Heart right ventricle (tissue), 16 donors: ENCODE measurements at regions of chr19 and their contacts with region 1.

Region 1: DNA sequence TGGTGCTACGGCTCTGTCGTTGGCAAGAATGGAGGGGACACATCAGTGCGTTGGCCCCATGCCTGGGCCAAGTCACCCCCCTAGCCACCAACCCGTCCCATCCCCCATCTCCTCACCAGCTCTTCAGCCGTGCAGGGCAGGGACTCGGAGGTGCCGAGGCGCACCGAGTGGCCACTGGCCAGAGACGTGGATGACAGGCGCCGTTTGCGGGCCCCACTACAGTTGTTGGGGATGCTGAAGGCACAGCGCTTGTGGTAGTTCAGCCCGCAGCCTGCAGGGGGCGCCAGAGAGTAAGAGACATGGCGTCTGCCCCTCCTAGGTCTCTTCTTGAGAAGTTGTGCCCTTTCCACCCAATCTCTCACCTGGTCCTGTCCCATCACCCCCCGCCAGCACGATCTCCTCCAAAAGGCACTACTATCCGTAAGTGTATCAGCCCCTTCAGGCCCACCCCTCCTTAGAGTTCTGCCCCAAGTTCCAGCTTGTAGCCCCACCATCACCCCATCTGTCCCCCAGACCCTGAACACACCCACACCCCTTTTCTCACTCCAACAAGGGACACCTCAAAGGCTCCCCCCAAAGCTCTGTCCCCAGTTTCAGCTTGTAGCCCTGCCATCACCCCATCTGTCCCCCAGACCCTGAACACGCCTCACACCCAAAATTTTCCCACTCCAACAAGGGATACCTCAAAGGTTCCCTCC is 12.4 kb downstream of the PRKD2 start:
- DNase-seq: peak; percentile 74 to 86
- ATAC-seq: peak; percentile 74 to 84 (median 78)
- H3K4me3 ChIP-seq: no peak overlapping the region
- H3K27ac ChIP-seq: no peak overlapping the region
- H3K4me1 ChIP-seq: no peaks in the 10 kb centered on the region
- H3K27me3 ChIP-seq: no peaks in the 10 kb centered on the region
- CTCF ChIP-seq: peak; percentile 92 to 98 (median 96)

Region 2: DNA sequence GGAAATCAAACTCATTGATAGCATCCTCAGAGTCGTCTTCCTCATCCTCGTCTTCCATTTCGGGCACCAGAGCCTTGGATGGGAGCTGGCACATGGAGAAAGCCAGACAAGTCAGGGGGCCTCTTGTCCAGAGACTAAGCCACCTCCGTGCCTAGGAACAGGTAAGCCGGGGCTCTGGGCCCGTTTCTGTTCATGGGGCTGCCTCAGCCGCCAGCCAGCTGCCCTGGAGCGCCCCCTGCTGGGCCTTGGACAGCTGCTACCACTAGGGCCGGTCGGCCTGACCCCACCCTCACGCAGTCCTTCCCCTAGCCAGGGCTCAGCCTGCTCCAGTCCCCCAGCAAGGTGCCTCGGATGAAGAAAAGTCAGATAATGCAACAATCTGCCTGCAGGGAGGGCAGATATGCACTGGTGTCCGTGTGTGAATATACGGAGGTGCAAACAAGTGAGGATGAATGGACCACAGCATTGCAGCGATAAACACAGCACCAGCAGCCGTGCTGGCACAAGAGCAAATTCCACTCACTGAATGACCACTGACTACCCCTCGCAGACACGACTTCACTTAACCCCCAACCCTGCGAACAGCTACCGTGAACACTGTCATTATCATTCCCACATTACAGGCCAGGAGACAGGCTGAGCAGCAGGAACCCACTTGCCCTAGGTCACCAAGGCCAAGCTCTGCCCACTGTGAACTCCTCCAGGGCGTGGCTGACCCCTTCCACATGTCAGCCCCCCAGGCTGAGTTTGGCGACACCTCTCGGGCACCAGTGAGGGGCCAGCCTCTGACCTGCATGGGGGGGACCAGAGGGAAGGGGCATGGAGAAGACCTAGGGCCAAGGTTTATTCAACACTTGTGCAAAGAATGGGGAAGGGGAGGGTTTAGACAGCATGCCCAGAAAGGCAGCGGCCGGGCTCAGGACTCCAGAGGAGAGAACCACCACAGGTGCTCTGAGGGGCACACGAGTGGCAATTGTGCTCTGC is 24.5 kb after region 1 on chr19:
- intact Hi-C with region 1: loop called in 7 of 10 experiments (anchors 1 to 2 kb)
- DNase-seq: peak; percentile 77 to 84
- ATAC-seq: peak; percentile 66 to 90 (median 81)
- H3K4me3 ChIP-seq: peak overlapping the region in 2 of 10 donors; percentile 12 to 38
- H3K27ac ChIP-seq: peak overlapping the region in 9 of 10 donors; percentile 23 to 84 (median 77)
- H3K4me1 ChIP-seq: peaks cover 9 to 64% (median 32%) of the 10 kb centered on the region in 9 donors
- H3K27me3 ChIP-seq: no peaks in the 10 kb centered on the region
- CTCF ChIP-seq: peak; percentile 87 to 98 (median 95)

Region 3: GRCh38 chr19:46746281-46747013 is 41.9 kb after region 1 on chr19 and contains the start of gene STRN4:
- intact Hi-C with region 1: loop called in 1 of 10 experiments (anchors 5 kb)
- DNase-seq: peak in 1 of 2 donors; percentile 63
- ATAC-seq: peak; percentile 34 to 85 (median 59)
- H3K4me3 ChIP-seq: peak within 1 kb of the TSS; percentile 79 to 99 (median 96)
- H3K27ac ChIP-seq: peak within 1 kb of the TSS; percentile 83 to 98 (median 94)
- H3K4me1 ChIP-seq: peaks cover under 1 to 53% (median 44%) of the 10 kb centered on the region in 9 donors
- H3K27me3 ChIP-seq: no peaks in the 10 kb centered on the region
- CTCF ChIP-seq: no peak
- total RNA-seq, gene STRN4: 43.3 to 56.1 (median 50.0) TPM

Region 4: GRCh38 chr19:46821498-46822409 is 117.2 kb after region 1 on chr19:
- intact Hi-C with region 1: no loop called
- DNase-seq: peak in 1 of 2 donors; percentile 42
- ATAC-seq: peak in 6 of 8 donors; percentile 29 to 66 (median 44)
- H3K4me3 ChIP-seq: no peak overlapping the region
- H3K27ac ChIP-seq: peak overlapping the region in 1 of 10 donors; percentile 72
- H3K4me1 ChIP-seq: peaks cover 0 to 40% (median 5%) of the 10 kb centered on the region in 9 donors
- H3K27me3 ChIP-seq: no peaks in the 10 kb centered on the region
- CTCF ChIP-seq: no peak